Activated CD4-positive, alpha-beta T cell treated with anti-CD3 and anti-CD28 coated beads for 36 hours (primary cell): ENCODE measurements at regions of chr2 and their contacts with region 1.

Region 1: DNA sequence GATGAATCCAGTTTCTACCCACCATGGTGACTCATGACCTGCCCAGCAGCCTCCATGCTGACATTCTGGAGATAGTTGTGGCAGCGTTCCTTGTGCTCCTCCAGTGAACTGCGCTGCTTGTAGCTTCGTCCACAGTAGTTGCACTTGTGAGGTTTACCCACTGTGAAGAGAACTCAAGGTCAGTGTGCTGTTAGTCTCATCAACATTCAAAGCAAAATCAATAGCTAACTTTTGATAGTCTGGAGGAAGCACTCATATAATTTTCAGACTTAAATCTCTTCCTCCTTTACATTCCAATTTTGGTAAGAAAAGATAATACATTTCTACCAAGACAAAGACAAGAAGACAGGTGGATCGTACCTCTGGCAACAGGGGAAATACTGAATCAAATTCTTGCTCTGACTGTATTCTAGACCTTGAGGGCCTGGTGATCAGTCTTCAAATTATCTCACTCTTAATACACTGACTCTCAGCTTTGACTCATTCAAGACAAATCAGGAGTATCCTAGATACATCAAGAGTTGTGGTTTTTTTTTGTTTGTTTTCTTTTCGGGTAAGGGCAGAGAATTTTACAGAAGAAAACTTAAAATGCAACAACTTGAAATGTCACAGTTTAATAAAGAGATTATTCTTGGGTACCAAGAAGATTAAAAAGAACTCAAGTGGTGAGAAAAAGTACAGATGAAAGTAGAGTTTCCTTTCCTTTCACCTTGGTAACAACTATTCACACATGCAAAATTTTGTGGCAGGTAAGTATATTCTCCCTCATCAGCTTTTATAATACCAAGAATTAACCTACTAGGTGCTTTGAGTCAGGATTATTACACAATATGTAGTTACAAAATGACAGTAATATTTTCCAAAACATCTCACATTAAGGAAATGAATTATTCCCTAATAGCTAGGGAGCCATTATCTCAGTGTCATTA is 129.2 kb downstream of the IKZF2 start:
- DNase-seq: peak; percentile 33
- ATAC-seq: peak; percentile 97
- H3K4me3 Mint-ChIP-seq: peak overlapping the region; percentile 5
- H3K27ac Mint-ChIP-seq: peak overlapping the region; percentile 49
- H3K4me1 Mint-ChIP-seq: peaks cover 25% of the 10 kb centered on the region
- H3K27me3 Mint-ChIP-seq: peaks cover 11% of the 10 kb centered on the region

Region 2: GRCh38 chr2:212797484-212798205 is 224.6 kb before region 1 on chr2:
- CTCF ChIA-PET with region 1: no interaction called
- POLR2A ChIA-PET with region 1: no interaction called
- intact Hi-C with region 1: loop called in 1 of 2 experiments (anchors 5 kb)
- DNase-seq: no peak
- ATAC-seq: peak; percentile 87
- H3K4me3 Mint-ChIP-seq: no peak overlapping the region
- H3K27ac Mint-ChIP-seq: no peak overlapping the region
- H3K4me1 Mint-ChIP-seq: no peaks in the 10 kb centered on the region
- H3K27me3 Mint-ChIP-seq: no peaks in the 10 kb centered on the region

Region 3: GRCh38 chr2:212968280-212968679 is 54.0 kb before region 1 on chr2:
- CTCF ChIA-PET with region 1: interaction called, 3 read pairs
- POLR2A ChIA-PET with region 1: no interaction called
- intact Hi-C with region 1: loop called in 1 of 2 experiments (anchors 1 kb)
- DNase-seq: peak; percentile 44
- ATAC-seq: peak; percentile 93
- H3K4me3 Mint-ChIP-seq: no peak overlapping the region
- H3K27ac Mint-ChIP-seq: peak overlapping the region; percentile 38
- H3K4me1 Mint-ChIP-seq: peaks cover 20% of the 10 kb centered on the region
- H3K27me3 Mint-ChIP-seq: no peaks in the 10 kb centered on the region

Region 4: DNA sequence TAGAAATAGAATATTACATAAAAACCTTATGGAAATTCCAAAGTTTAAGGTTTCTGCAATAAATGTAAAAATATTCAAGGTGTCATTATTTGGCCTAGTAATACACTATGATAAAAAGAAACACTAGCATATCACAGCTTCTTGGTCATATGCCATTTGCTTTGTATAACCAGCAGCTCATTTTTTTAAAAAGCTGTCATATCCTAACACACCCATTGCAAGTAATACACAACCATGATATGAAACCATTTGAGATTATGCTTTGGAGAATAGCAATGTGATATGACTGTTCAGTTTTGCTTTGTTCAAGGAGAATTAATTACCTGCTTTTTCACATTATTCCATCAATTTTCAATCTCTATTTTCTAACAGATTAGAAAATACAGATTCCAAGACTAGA is 19.9 kb before region 1 on chr2:
- CTCF ChIA-PET with region 1: no interaction called
- POLR2A ChIA-PET with region 1: no interaction called
- intact Hi-C with region 1: loop called in 1 of 2 experiments (anchors 2 kb)
- DNase-seq: no peak
- ATAC-seq: peak; percentile 26
- H3K4me3 Mint-ChIP-seq: no peak overlapping the region
- H3K27ac Mint-ChIP-seq: no peak overlapping the region
- H3K4me1 Mint-ChIP-seq: peaks cover 21% of the 10 kb centered on the region
- H3K27me3 Mint-ChIP-seq: peaks cover 2% of the 10 kb centered on the region

Region 5: GRCh38 chr2:213034585-213034984 is 12.3 kb after region 1 on chr2:
- CTCF ChIA-PET with region 1: interaction called, 6 read pairs
- POLR2A ChIA-PET with region 1: interaction called, 6 read pairs
- intact Hi-C with region 1: loop called (anchors 1 to 2 kb)
- DNase-seq: no peak
- ATAC-seq: peak; percentile 64
- H3K4me3 Mint-ChIP-seq: no peak overlapping the region
- H3K27ac Mint-ChIP-seq: no peak overlapping the region
- H3K4me1 Mint-ChIP-seq: peaks cover 39% of the 10 kb centered on the region
- H3K27me3 Mint-ChIP-seq: peaks cover 1% of the 10 kb centered on the region

Region 6: DNA sequence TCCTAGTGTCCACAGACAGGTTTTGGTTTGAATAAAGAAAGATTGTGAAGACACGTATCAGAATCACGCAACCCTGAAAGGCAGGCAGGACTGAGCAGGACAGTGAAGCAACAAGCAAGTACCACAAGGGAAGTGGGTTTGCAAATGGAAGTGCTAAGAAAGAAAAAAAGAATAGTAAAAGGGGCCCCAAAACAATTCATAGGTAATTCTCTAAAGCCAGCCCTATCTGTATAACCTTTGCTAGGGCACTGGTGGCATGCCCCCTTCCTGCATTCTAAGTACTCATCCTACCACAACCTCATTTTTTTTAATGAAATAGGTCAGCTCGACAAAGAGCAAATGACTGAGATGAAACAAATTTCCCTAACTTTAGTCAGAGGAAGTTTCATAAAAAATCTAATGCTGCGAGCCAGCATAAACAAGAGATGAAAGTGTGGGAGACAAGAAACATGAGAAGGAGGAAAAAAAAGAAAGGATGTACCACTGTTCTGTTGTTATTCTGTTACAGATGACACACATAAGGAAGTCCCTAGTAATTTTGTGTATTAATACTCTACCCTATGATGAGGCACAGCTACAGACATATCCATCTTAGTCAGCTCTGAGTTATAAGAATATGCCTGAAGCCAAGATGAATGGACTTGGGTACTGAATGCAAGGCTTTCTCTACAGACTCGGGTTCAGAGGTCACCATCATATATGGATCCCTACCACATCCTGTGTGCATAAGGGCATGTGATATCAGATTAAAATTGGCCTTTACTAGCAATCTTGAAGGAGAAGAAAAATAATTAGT is 97.0 kb after region 1 on chr2:
- CTCF ChIA-PET with region 1: interaction called, 3 read pairs
- POLR2A ChIA-PET with region 1: no interaction called
- intact Hi-C with region 1: loop called (anchors 1 to 2 kb)
- DNase-seq: peak; percentile 45
- ATAC-seq: peak; percentile 92
- H3K4me3 Mint-ChIP-seq: peak overlapping the region; percentile 19
- H3K27ac Mint-ChIP-seq: peak overlapping the region; percentile 84
- H3K4me1 Mint-ChIP-seq: peaks cover 55% of the 10 kb centered on the region
- H3K27me3 Mint-ChIP-seq: no peaks in the 10 kb centered on the region